ENCODE measurements at regions of chr21 and their contacts with region 1.

Region 1: DNA sequence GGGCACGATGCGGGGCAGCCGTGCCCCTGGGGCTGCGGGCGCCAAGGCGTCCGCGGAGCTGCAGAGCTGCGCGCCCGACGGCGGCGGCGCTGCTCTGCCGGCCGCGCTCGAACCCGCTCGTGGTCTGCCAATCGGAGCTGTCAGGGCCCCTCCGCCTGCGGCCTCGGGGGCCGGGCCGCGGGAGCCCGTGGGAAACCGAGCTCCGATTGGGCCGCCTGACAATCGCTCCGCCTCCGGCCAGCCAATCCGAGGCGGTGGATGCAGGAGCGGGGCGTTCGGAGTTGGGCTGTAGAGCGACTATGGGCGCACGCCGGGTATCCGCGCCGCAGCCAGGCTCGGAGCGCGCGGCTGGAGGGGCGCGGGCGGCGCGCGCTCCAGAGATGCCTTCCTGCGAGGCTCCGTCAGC is 100.5 kb upstream of the SOD1 start:
- DNase-seq: peak; percentile 89 to 94 (median 90)
- H3K4me3 ChIP-seq: peak overlapping the region; percentile 43 to 78
- H3K4me3 Mint-ChIP-seq: peak overlapping the region in 7 of 8 donors; percentile 85 to 94 (median 93)
- H3K27ac ChIP-seq: peak overlapping the region; percentile 1
- H3K27ac Mint-ChIP-seq: peak overlapping the region in 1 of 7 donors; percentile 41
- H3K4me1 ChIP-seq: peaks cover 27% of the 10 kb centered on the region
- H3K4me1 Mint-ChIP-seq: peaks cover 14 to 45% (median 30%) of the 10 kb centered on the region in 4 donors
- H3K27me3 ChIP-seq: no peaks in the 10 kb centered on the region
- H3K27me3 Mint-ChIP-seq: peaks cover 7 to 12% of the 10 kb centered on the region in 2 donors

Region 2: DNA sequence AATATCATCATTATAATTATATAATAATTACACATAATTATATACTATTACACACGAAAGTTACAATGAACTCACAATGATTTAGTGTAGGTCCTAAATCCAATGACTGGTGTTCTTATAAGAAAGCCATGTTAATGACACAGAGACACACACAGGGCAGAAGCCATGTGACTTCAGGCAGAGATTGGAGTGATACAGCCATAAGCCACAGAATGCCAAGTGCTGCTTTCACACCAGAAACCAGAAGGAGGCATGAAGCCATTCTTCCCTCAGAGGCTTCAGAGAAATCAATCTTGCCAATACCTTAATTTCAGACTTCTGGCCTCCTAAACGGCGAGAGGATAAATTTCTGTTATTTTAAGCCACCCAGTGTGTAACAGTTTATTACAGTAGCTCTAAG is 373.3 kb before region 1 on chr21:
- CTCF ChIA-PET with region 1: interaction called, 11 read pairs
- POLR2A ChIA-PET with region 1: interaction called, 17 read pairs
- intact Hi-C with region 1: loop called (anchors 2 kb)
- DNase-seq: peak in 3 of 5 donors; percentile 24 to 68 (median 27)
- H3K4me3 ChIP-seq: peak overlapping the region; percentile 70 to 85
- H3K4me3 Mint-ChIP-seq: peak overlapping the region; percentile 85 to 94 (median 90)
- H3K27ac ChIP-seq: peak overlapping the region; percentile 62
- H3K27ac Mint-ChIP-seq: peak overlapping the region; percentile 70 to 94 (median 92)
- H3K4me1 ChIP-seq: peaks cover 88% of the 10 kb centered on the region
- H3K4me1 Mint-ChIP-seq: peaks cover 58 to 84% (median 70%) of the 10 kb centered on the region in 4 donors
- H3K27me3 ChIP-seq: no peaks in the 10 kb centered on the region
- H3K27me3 Mint-ChIP-seq: no peaks in the 10 kb centered on the region

Region 3: GRCh38 chr21:31326522-31327242 is 232.3 kb before region 1 on chr21:
- CTCF ChIA-PET with region 1: no interaction called
- POLR2A ChIA-PET with region 1: no interaction called
- intact Hi-C with region 1: loop called (anchors 2 kb)
- DNase-seq: peak; percentile 41 to 69 (median 52)
- H3K4me3 ChIP-seq: no peak overlapping the region
- H3K4me3 Mint-ChIP-seq: peak overlapping the region; percentile 73 to 90 (median 79)
- H3K27ac ChIP-seq: peak overlapping the region; percentile 35
- H3K27ac Mint-ChIP-seq: peak overlapping the region; percentile 61 to 94 (median 82)
- H3K4me1 ChIP-seq: peaks cover 18% of the 10 kb centered on the region
- H3K4me1 Mint-ChIP-seq: peaks cover 18 to 33% (median 21%) of the 10 kb centered on the region in 4 donors
- H3K27me3 ChIP-seq: no peaks in the 10 kb centered on the region
- H3K27me3 Mint-ChIP-seq: no peaks in the 10 kb centered on the region

Region 4: DNA sequence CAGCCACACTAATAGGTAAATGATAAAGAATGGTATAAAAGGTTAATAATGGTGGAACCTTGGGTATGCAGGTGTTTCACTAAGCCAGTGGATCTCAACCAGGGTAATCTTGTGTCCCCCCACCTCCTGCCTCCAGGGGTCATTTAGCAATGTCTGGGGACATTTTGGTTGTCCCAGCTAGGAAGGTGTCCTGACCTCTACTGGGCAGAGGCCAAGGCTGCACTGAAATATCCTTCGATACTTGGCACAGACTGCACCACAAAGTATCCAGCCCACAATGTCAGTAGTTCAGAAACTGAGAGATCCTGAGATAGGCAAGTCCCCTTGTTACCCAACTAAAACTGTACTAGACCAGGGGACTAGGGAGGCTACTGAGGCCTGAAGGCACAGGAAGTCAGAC is 101.3 kb before region 1 on chr21:
- CTCF ChIA-PET with region 1: no interaction called
- POLR2A ChIA-PET with region 1: no interaction called
- intact Hi-C with region 1: no loop called
- DNase-seq: no peak
- H3K4me3 ChIP-seq: no peak overlapping the region
- H3K4me3 Mint-ChIP-seq: no peak overlapping the region
- H3K27ac ChIP-seq: no peak overlapping the region
- H3K27ac Mint-ChIP-seq: no peak overlapping the region
- H3K4me1 ChIP-seq: peaks cover 5% of the 10 kb centered on the region
- H3K4me1 Mint-ChIP-seq: peaks cover 0 to 8% (median 4%) of the 10 kb centered on the region in 4 donors
- H3K27me3 ChIP-seq: no peaks in the 10 kb centered on the region
- H3K27me3 Mint-ChIP-seq: no peaks in the 10 kb centered on the region

Region 5: DNA sequence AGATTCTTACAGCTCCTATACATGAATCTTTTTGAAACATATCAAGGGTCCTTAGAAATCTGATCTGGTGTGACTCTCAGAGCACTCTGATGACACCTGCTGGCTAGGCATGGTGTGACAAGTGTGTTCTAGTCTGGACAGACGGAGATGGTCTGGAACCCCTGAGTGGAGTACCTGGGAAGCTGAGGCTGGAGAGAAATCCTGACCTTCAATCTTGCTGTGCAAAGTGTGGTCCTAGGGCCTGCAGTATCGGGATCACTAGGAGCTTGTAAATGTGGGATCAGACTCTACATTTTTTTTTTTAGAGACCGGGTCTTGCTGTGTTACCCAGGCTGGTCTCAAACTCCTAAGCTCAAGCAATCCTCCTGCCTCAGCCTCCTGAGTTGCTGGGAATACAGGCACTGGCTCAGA is 21.9 kb after region 1 on chr21:
- CTCF ChIA-PET with region 1: interaction called, 40 read pairs
- POLR2A ChIA-PET with region 1: interaction called, 4 read pairs
- intact Hi-C with region 1: no loop called
- DNase-seq: peak; percentile 58 to 72 (median 66)
- H3K4me3 ChIP-seq: no peak overlapping the region
- H3K4me3 Mint-ChIP-seq: no peak overlapping the region
- H3K27ac ChIP-seq: no peak overlapping the region
- H3K27ac Mint-ChIP-seq: no peak overlapping the region
- H3K4me1 ChIP-seq: no peaks in the 10 kb centered on the region
- H3K4me1 Mint-ChIP-seq: peaks cover 3 to 6% (median 4%) of the 10 kb centered on the region in 4 donors
- H3K27me3 ChIP-seq: no peaks in the 10 kb centered on the region
- H3K27me3 Mint-ChIP-seq: peaks cover 0 to 3% of the 10 kb centered on the region in 2 donors

Region 6: DNA sequence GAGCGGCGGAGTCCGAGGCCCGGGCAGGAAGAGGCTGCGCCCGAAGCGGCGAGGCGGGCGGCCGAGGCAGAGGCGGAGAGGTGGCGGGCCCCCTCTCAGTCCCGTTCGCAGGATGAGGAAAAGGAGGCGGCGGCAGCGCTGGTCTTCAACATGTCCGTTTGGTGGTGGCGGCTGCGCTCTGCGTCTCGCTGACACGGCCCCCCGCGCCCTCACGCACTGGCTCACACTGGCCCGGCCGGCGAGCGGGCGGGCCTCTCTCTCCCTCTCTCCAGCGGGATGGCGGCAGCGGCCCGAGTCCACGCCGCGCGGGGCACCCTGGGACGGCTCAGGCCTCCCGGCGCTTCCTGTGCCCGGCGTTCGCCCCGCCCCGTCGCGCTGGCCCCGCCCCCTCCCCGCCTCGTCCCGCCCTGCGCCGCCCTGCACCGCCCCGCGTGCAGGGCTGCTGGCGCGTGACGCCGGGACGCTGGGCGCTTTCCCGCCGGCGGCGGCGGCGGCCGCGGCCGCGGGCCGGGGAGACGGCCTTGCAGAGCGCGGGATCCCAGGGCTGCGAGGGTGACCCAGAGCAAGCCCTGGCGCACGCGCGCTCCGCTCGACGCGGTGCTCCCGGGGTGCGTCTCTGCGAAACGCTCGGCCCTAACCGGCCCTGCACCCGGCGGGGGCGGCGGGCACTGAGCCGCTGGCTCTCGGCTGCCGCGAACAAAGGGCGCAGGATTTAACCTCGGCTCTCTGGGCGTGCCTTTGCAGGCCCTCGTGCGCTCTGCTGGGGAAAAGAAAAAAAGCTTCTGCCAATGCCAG is 173.0 kb after region 1 on chr21 and contains the start of gene SCAF4:
- CTCF ChIA-PET with region 1: no interaction called
- POLR2A ChIA-PET with region 1: no interaction called
- intact Hi-C with region 1: loop called (anchors 5 kb)
- DNase-seq: peak; percentile 73 to 80 (median 76)
- H3K4me3 ChIP-seq: peak within 1 kb of the TSS; percentile 67 to 89
- H3K4me3 Mint-ChIP-seq: peak within 1 kb of the TSS; percentile 24 to 94 (median 90)
- H3K27ac ChIP-seq: peak within 1 kb of the TSS; percentile 82
- H3K27ac Mint-ChIP-seq: peak within 1 kb of the TSS; percentile 54 to 94 (median 88)
- H3K4me1 ChIP-seq: peaks cover 50% of the 10 kb centered on the region
- H3K4me1 Mint-ChIP-seq: peaks cover 4 to 18% (median 9%) of the 10 kb centered on the region in 4 donors
- H3K27me3 ChIP-seq: no peaks in the 10 kb centered on the region
- H3K27me3 Mint-ChIP-seq: no peaks in the 10 kb centered on the region
- total RNA-seq, gene SCAF4: 60.2 to 64.7 TPM

Region 7: DNA sequence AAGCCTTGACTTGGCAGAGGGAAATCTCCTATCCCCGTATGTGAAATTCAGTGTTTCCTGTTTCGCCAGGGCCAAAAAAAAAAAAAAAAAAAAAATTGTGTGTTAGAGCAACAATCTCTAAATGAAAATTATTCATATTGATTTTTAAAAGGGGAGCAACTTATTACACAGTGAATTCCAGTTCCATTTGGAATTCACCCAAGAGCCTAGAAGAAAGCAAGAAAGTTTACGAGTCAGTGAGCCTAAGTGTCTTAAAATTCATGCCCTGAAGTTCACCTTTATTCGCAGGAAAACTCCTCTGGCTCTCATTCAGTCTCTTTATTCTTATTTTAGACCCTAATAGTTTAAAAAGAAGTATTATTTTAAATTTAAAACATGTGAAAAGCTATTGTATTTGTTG is 271.7 kb after region 1 on chr21:
- CTCF ChIA-PET with region 1: no interaction called
- POLR2A ChIA-PET with region 1: no interaction called
- intact Hi-C with region 1: no loop called
- DNase-seq: no peak
- H3K4me3 ChIP-seq: no peak overlapping the region
- H3K4me3 Mint-ChIP-seq: no peak overlapping the region
- H3K27ac ChIP-seq: no peak overlapping the region
- H3K27ac Mint-ChIP-seq: no peak overlapping the region
- H3K4me1 ChIP-seq: no peaks in the 10 kb centered on the region
- H3K4me1 Mint-ChIP-seq: no peaks in the 10 kb centered on the region
- H3K27me3 ChIP-seq: no peaks in the 10 kb centered on the region
- H3K27me3 Mint-ChIP-seq: peaks cover 0 to 3% of the 10 kb centered on the region in 2 donors

Measured in CD4-positive, alpha-beta memory T cell (primary cell).